Activated naive CD4-positive, alpha-beta T cell treated with anti-CD3 and anti-CD28 coated beads, Interleukin-2, amount 10 ng/mL, durations not matched to agents 7 days and 5 days (primary cell): ENCODE measurements at regions of chr1 and their contacts with region 1.

Region 1: DNA sequence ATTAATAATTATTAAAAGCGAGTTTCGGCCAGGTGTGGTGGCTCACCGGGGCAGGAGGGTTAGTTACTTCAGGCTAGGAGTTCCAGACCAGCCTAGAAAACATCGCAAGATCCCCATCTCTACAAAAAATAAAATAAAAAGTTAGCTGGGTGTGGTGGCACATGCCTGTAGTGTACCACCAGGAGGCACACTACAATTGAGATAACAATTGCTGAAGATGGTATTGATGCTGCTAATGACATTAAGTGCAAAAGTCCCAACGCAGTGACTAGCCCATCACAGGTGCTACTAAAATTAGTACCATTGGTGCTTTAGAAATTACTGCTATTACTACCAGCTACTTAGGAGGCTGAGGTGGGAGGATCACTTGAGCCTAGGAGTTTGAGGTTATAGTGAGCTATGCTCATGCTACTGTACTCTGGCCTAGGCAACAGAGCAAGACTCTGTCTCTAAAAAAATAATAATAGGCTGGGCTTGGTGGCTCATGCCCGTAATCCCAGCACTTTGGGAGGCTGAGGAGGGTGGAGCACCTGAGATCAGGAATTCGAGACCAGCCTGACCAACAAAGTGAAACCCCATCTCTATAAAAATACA is 156.6 kb downstream of the GREM2 start:
- DNase-seq: no peak
- H3K4me3 Mint-ChIP-seq: no peak overlapping the region
- H3K27ac Mint-ChIP-seq: no peak overlapping the region
- H3K4me1 Mint-ChIP-seq: no peaks in the 10 kb centered on the region
- H3K27me3 Mint-ChIP-seq: no peaks in the 10 kb centered on the region

Region 2: GRCh38 chr1:240602189-240602588 is 146.9 kb after region 1 on chr1:
- CTCF ChIA-PET with region 1: interaction called, 10 read pairs
- DNase-seq: no peak
- H3K4me3 Mint-ChIP-seq: no peak overlapping the region
- H3K27ac Mint-ChIP-seq: no peak overlapping the region
- H3K4me1 Mint-ChIP-seq: no peaks in the 10 kb centered on the region
- H3K27me3 Mint-ChIP-seq: no peaks in the 10 kb centered on the region

Region 3: DNA sequence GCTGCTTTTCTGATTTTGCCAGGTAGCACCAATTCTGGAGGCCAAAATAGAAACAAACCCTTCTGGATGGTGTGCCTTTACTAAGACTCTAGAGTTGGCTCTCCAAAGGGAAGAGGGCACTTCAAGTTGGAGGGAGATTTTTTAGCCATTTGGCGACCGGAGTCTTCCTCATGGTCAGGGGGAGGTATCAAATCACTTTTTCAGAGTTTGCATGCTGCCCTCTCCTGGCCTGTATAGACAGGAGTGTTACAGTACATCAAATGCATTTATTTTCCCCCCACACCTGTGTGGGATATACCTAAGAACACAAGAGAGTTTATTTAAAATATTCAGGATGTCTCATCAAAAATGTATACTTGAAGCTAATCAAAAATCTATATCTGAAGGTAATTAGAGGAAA is 153.4 kb after region 1 on chr1:
- CTCF ChIA-PET with region 1: interaction called, 11 read pairs
- DNase-seq: no peak
- H3K4me3 Mint-ChIP-seq: no peak overlapping the region
- H3K27ac Mint-ChIP-seq: no peak overlapping the region
- H3K4me1 Mint-ChIP-seq: peaks cover 34% of the 10 kb centered on the region
- H3K27me3 Mint-ChIP-seq: peaks cover 34% of the 10 kb centered on the region

Region 4: GRCh38 chr1:240691521-240692338 is 236.4 kb after region 1 on chr1:
- CTCF ChIA-PET with region 1: interaction called, 24 read pairs
- DNase-seq: peak; percentile 32
- H3K4me3 Mint-ChIP-seq: no peak overlapping the region
- H3K27ac Mint-ChIP-seq: no peak overlapping the region
- H3K4me1 Mint-ChIP-seq: peaks cover 26% of the 10 kb centered on the region
- H3K27me3 Mint-ChIP-seq: peaks cover 14% of the 10 kb centered on the region